GM12878 (cell line): ENCODE measurements at regions of chr11 and their contacts with region 1.

Region 1: GRCh38 chr11:46489661-46490560 is 98.3 kb upstream of the CHRM4 start:
- DNase-seq: no peak
- ATAC-seq: peak; percentile 93
- H3K4me3 ChIP-seq: no peak overlapping the region
- H3K27ac ChIP-seq: peak overlapping the region; percentile 37; the same call in 1 of the 2 replicates
- H3K4me1 ChIP-seq: peaks cover 8% of the 10 kb centered on the region
- H3K27me3 ChIP-seq: no peaks in the 10 kb centered on the region
- CTCF ChIP-seq: peak; percentile 68 to 80 (median 68)
- EP300 ChIP-seq: no peak
- POLR2A ChIP-seq: no peak
- RAD21 ChIP-seq: peak; percentile 62

Region 2: GRCh38 chr11:46438211-46438610 is 51.7 kb before region 1 on chr11:
- CTCF ChIA-PET with region 1: interaction called, 17 read pairs
- POLR2A ChIA-PET with region 1: interaction called, 8 read pairs
- RAD21 ChIA-PET with region 1: interaction called, 23 read pairs
- SMC1A ChIA-PET with region 1: interaction called, 105 read pairs
- in situ Hi-C with region 1: no loop called
- intact Hi-C with region 1: no loop called
- DNase-seq: no peak
- ATAC-seq: no peak
- H3K4me3 ChIP-seq: no peak overlapping the region
- H3K27ac ChIP-seq: no peak overlapping the region
- H3K4me1 ChIP-seq: peaks cover 4% of the 10 kb centered on the region; the same call in 1 of the 2 replicates
- H3K27me3 ChIP-seq: no peaks in the 10 kb centered on the region
- CTCF ChIP-seq: no peak
- EP300 ChIP-seq: no peak
- POLR2A ChIP-seq: no peak
- RAD21 ChIP-seq: no peak

Region 3: GRCh38 chr11:46475926-46476545 is 13.9 kb before region 1 on chr11:
- CTCF ChIA-PET with region 1: interaction called, 135 read pairs
- POLR2A ChIA-PET with region 1: interaction called, 69 read pairs
- RAD21 ChIA-PET with region 1: interaction called, 130 read pairs
- SMC1A ChIA-PET with region 1: interaction called, 167 read pairs
- in situ Hi-C with region 1: no loop called
- intact Hi-C with region 1: no loop called
- DNase-seq: peak; percentile 28
- ATAC-seq: peak; percentile 73
- H3K4me3 ChIP-seq: no peak overlapping the region
- H3K27ac ChIP-seq: no peak overlapping the region
- H3K4me1 ChIP-seq: peaks cover 15% of the 10 kb centered on the region
- H3K27me3 ChIP-seq: no peaks in the 10 kb centered on the region
- CTCF ChIP-seq: no peak
- EP300 ChIP-seq: no peak
- POLR2A ChIP-seq: no peak
- RAD21 ChIP-seq: no peak

Region 4: DNA sequence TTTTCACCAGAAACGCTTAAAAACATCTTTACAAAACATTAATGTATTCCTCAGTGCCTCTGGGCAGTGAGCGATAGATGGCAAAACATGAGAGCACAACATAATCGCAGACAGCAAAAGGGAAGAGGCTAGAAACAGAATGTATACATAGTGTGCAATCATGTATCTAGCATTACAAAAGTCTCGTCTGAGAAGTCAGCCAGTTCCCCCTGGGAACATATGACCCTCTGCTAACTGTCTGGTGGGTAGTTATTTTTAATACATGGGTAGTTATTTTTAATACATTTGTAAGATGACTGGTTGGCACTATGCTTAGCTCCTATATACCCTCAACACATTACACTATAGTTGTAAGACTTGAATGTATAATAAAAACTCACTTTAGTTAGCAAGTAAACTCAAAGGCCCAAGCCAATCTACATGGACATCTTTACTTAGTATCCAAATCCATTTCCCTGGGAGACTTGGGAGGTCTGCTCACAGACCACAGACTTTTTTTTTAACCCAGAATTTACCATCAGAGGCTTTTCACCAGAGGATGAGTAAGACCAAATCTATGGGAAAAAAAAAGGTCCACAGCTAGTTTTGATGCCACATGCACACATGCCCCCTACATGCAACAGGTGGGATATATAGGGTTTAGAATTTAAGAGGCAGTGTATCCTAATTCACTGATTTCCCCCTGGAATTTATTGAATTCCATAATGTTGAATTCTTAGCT is 32.2 kb after region 1 on chr11:
- CTCF ChIA-PET with region 1: interaction called, 50 read pairs
- POLR2A ChIA-PET with region 1: interaction called, 13 read pairs
- RAD21 ChIA-PET with region 1: interaction called, 51 read pairs
- SMC1A ChIA-PET with region 1: interaction called, 71 read pairs
- in situ Hi-C with region 1: no loop called
- intact Hi-C with region 1: no loop called
- DNase-seq: no peak
- ATAC-seq: peak; percentile 77
- H3K4me3 ChIP-seq: no peak overlapping the region
- H3K27ac ChIP-seq: peak overlapping the region; percentile 50
- H3K4me1 ChIP-seq: peaks cover 14% of the 10 kb centered on the region
- H3K27me3 ChIP-seq: no peaks in the 10 kb centered on the region
- CTCF ChIP-seq: peak; percentile 26 to 46 (median 29); a peak in 4 of 6 replicates
- EP300 ChIP-seq: no peak
- POLR2A ChIP-seq: no peak
- RAD21 ChIP-seq: peak; percentile 58

Region 5: DNA sequence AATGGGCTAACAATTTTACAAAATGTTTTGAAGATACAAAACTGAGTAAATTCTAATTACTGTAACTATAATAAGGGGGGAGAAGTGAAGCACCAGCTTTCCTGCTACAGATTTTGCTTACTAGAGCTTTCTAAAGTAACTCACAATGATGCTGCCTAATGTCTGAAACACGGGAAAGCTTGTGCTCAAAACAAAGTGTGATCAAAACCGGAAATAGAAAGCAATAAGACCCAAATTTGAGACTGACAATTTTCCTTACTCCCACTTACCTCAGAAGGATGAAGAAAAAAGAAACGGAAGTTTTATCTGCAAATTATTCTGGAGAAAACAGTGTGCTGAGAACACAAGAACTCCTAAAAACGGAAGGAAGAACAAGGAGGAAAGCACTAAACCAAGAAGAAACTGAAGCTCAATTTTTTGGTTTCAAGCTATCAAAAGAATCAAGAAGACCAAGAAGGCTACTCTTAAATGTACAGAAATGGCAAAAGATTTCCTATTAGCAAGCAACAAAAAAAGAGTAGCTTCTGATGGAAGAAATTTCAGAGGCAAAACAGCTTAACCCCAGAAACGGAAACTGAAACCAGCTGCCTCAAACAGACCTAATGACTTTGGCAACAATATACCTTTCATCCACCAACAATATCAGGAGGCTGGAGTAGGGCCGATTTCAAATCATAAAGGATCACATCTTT is 70.5 kb after region 1 on chr11:
- CTCF ChIA-PET with region 1: interaction called, 10 read pairs
- POLR2A ChIA-PET with region 1: interaction called, 4 read pairs
- RAD21 ChIA-PET with region 1: interaction called, 6 read pairs
- SMC1A ChIA-PET with region 1: interaction called, 16 read pairs
- in situ Hi-C with region 1: no loop called
- intact Hi-C with region 1: no loop called
- DNase-seq: peak; percentile 33
- ATAC-seq: peak; percentile 86
- H3K4me3 ChIP-seq: peak overlapping the region; percentile 64
- H3K27ac ChIP-seq: peak overlapping the region; percentile 66
- H3K4me1 ChIP-seq: peaks cover 4% of the 10 kb centered on the region
- H3K27me3 ChIP-seq: no peaks in the 10 kb centered on the region
- CTCF ChIP-seq: no peak
- EP300 ChIP-seq: no peak
- POLR2A ChIP-seq: no peak
- RAD21 ChIP-seq: no peak

Region 6: GRCh38 chr11:46570790-46571398 is 81.0 kb after region 1 on chr11:
- CTCF ChIA-PET with region 1: no interaction called
- POLR2A ChIA-PET with region 1: no interaction called
- RAD21 ChIA-PET with region 1: no interaction called
- SMC1A ChIA-PET with region 1: no interaction called
- in situ Hi-C with region 1: no loop called
- intact Hi-C with region 1: no loop called
- DNase-seq: no peak
- ATAC-seq: peak; percentile 48
- H3K4me3 ChIP-seq: no peak overlapping the region
- H3K27ac ChIP-seq: no peak overlapping the region
- H3K4me1 ChIP-seq: peaks cover 8% of the 10 kb centered on the region
- H3K27me3 ChIP-seq: no peaks in the 10 kb centered on the region
- CTCF ChIP-seq: no peak
- EP300 ChIP-seq: no peak
- POLR2A ChIP-seq: no peak
- RAD21 ChIP-seq: no peak

Region 7: GRCh38 chr11:46686886-46687795 is 197.2 kb after region 1 on chr11:
- CTCF ChIA-PET with region 1: no interaction called
- POLR2A ChIA-PET with region 1: no interaction called
- RAD21 ChIA-PET with region 1: no interaction called
- SMC1A ChIA-PET with region 1: no interaction called
- in situ Hi-C with region 1: no loop called
- intact Hi-C with region 1: no loop called
- DNase-seq: no peak
- ATAC-seq: no peak
- H3K4me3 ChIP-seq: no peak overlapping the region
- H3K27ac ChIP-seq: no peak overlapping the region
- H3K4me1 ChIP-seq: no peaks in the 10 kb centered on the region
- H3K27me3 ChIP-seq: no peaks in the 10 kb centered on the region
- CTCF ChIP-seq: no peak
- EP300 ChIP-seq: no peak
- POLR2A ChIP-seq: no peak
- RAD21 ChIP-seq: no peak